GM12878 (cell line): ENCODE measurements at regions of chr20 and their contacts with region 1.

Region 1: DNA sequence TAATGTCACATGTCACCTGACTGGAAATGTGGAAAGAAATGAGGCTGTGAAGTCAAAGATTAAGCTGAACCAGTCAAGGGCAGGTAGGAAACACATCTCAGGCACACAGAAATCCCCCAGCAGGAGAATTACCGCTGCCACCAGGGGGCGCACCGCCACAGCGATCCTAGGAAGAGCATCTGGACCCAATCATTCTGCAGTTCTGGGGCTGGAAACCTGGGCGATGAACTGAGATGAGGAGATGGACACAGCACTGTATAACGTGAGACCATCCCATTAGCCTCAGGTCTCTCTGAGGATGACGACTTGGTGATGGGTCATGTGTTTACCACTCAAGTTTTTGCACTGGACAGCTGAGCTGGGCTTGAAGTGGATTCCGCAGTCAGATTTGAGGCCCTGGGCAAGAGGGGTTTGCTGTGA is 6.5 kb upstream of the SLC24A3 start:
- DNase-seq: peak; percentile 8
- ATAC-seq: peak; percentile 90
- H3K4me3 ChIP-seq: no peak overlapping the region
- H3K27ac ChIP-seq: no peak overlapping the region
- H3K4me1 ChIP-seq: no peaks in the 10 kb centered on the region
- H3K27me3 ChIP-seq: no peaks in the 10 kb centered on the region; a peak in 3 of 4 replicates
- CTCF ChIP-seq: peak; percentile 82 to 85 (median 85)
- EP300 ChIP-seq: no peak
- POLR2A ChIP-seq: no peak
- RAD21 ChIP-seq: peak; percentile 80

Region 2: GRCh38 chr20:19193349-19193748 is 12.6 kb before region 1 on chr20:
- CTCF ChIA-PET with region 1: interaction called, 30 read pairs
- POLR2A ChIA-PET with region 1: interaction called, 3 read pairs
- RAD21 ChIA-PET with region 1: no interaction called
- SMC1A ChIA-PET with region 1: interaction called, 5 read pairs
- in situ Hi-C with region 1: no loop called
- intact Hi-C with region 1: no loop called
- DNase-seq: no peak
- ATAC-seq: no peak
- H3K4me3 ChIP-seq: no peak overlapping the region
- H3K27ac ChIP-seq: no peak overlapping the region
- H3K4me1 ChIP-seq: no peaks in the 10 kb centered on the region
- H3K27me3 ChIP-seq: no peaks in the 10 kb centered on the region
- CTCF ChIP-seq: no peak
- EP300 ChIP-seq: no peak
- POLR2A ChIP-seq: no peak
- RAD21 ChIP-seq: no peak

Region 3: GRCh38 chr20:19249106-19249879 is 43.3 kb after region 1 on chr20:
- CTCF ChIA-PET with region 1: interaction called, 11 read pairs
- POLR2A ChIA-PET with region 1: no interaction called
- RAD21 ChIA-PET with region 1: no interaction called
- SMC1A ChIA-PET with region 1: no interaction called
- in situ Hi-C with region 1: no loop called
- intact Hi-C with region 1: no loop called
- DNase-seq: no peak
- ATAC-seq: peak; percentile 63
- H3K4me3 ChIP-seq: no peak overlapping the region
- H3K27ac ChIP-seq: no peak overlapping the region
- H3K4me1 ChIP-seq: no peaks in the 10 kb centered on the region
- H3K27me3 ChIP-seq: 0 out of 4 replicates have a peak, but pooled peaks cover 0 to 2% of the 10 kb centered on the region in 2 experiments
- CTCF ChIP-seq: peak in 2 of 3 experiments; percentile 18 to 28; a peak in 1 of 6 replicates
- EP300 ChIP-seq: no peak
- POLR2A ChIP-seq: no peak
- RAD21 ChIP-seq: 0 out of 2 replicates have a peak, but pooled peaks have one; percentile 12

Region 4: DNA sequence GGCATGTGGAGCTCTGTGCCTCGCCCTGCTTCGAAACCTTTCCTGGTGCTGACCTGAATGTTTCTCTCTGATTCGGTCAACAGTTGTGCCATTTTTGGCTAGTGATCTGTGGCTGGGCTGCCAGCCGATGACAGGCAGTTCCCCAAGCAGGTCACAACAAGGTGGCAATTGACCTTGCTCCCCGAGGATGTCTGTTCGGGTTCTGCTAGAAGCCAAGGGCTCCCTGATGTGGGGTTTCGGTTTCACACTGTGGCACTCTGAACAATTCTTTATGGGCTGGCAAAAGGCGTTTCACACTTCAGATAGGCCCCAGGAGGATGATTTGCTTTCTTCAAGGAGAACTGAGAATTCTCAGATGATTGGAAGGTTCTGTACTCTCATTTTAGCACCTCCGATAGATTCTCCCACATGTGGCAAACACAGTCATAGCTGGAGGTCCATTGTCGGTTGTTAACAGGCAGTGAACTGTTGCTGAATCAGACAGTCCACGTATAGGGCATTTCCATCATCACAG is 142.0 kb after region 1 on chr20:
- CTCF ChIA-PET with region 1: interaction called, 4 read pairs
- POLR2A ChIA-PET with region 1: no interaction called
- RAD21 ChIA-PET with region 1: no interaction called
- SMC1A ChIA-PET with region 1: no interaction called
- in situ Hi-C with region 1: no loop called
- intact Hi-C with region 1: loop called (anchors 10 kb)
- DNase-seq: peak; percentile 55
- ATAC-seq: peak; percentile 96
- H3K4me3 ChIP-seq: no peak overlapping the region
- H3K27ac ChIP-seq: no peak overlapping the region
- H3K4me1 ChIP-seq: peaks cover 9% of the 10 kb centered on the region
- H3K27me3 ChIP-seq: peaks cover 0 to 4% of the 10 kb centered on the region in 2 experiments; a peak in 2 of 4 replicates
- CTCF ChIP-seq: no peak
- EP300 ChIP-seq: peak; percentile 33 to 56; a peak in 2 of 4 replicates
- POLR2A ChIP-seq: no peak
- RAD21 ChIP-seq: no peak

Region 5: DNA sequence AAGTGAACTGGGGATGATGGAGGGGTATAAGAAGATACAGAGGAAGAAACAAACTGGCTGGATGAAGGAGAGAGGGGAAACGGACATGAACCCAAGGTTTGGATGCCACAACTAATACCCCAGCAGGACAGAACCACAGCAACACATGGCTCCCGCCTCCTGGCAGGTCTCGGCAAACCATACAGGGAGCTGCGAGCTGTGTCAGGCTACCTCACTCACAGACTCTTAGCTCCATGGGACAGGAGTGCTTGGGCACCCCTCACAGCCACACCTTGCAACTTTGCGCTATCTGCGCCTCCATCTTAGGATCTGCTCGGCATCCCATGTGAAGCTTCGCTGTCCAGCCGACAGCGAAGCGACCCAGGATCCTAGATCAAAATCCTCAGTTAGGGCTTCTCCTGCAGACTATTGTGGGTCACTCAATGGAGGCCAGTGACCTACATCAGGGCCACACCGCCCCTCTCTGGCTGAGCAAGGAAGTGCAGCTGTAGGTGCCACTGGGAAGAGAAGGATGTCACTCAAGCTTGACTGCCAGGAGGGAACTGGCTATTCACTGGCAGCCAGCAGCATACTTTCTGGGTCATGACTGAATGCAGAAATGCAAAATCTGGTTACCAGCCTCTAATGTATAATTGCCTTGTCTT is 377.7 kb after region 1 on chr20:
- CTCF ChIA-PET with region 1: interaction called, 43 read pairs
- POLR2A ChIA-PET with region 1: no interaction called
- RAD21 ChIA-PET with region 1: interaction called, 5 read pairs
- SMC1A ChIA-PET with region 1: interaction called, 14 read pairs
- in situ Hi-C with region 1: loop called (anchors 5 kb)
- intact Hi-C with region 1: loop called (anchors 2 kb)
- DNase-seq: no peak
- ATAC-seq: peak; percentile 87
- H3K4me3 ChIP-seq: no peak overlapping the region
- H3K27ac ChIP-seq: no peak overlapping the region
- H3K4me1 ChIP-seq: no peaks in the 10 kb centered on the region
- H3K27me3 ChIP-seq: no peaks in the 10 kb centered on the region; a peak in 2 of 4 replicates
- CTCF ChIP-seq: peak; percentile 70 to 87 (median 73)
- EP300 ChIP-seq: no peak
- POLR2A ChIP-seq: no peak
- RAD21 ChIP-seq: peak; percentile 95

Region 6: GRCh38 chr20:19802492-19803158 is 596.6 kb after region 1 on chr20:
- CTCF ChIA-PET with region 1: no interaction called
- POLR2A ChIA-PET with region 1: no interaction called
- RAD21 ChIA-PET with region 1: no interaction called
- SMC1A ChIA-PET with region 1: no interaction called
- in situ Hi-C with region 1: no loop called
- intact Hi-C with region 1: no loop called
- DNase-seq: no peak
- ATAC-seq: peak; percentile 82
- H3K4me3 ChIP-seq: no peak overlapping the region
- H3K27ac ChIP-seq: no peak overlapping the region
- H3K4me1 ChIP-seq: no peaks in the 10 kb centered on the region
- H3K27me3 ChIP-seq: no peaks in the 10 kb centered on the region
- CTCF ChIP-seq: peak in 2 of 3 experiments; percentile 12 to 29; a peak in 3 of 6 replicates
- EP300 ChIP-seq: no peak
- POLR2A ChIP-seq: no peak
- RAD21 ChIP-seq: 0 out of 2 replicates have a peak, but pooled peaks have one; percentile 1